Psoas muscle (tissue), 8 donors: ENCODE measurements at regions of chr16 and their contacts with region 1.

Region 1: GRCh38 chr16:46607529-46607928 is 13.7 kb downstream of the SHCBP1 start:
- DNase-seq: no peak
- ATAC-seq: peak in 2 of 4 donors; percentile 58
- H3K4me3 ChIP-seq: no peak overlapping the region
- H3K27ac ChIP-seq: no peak overlapping the region
- H3K4me1 ChIP-seq: no peaks in the 10 kb centered on the region
- H3K27me3 ChIP-seq: no peaks in the 10 kb centered on the region
- CTCF ChIP-seq: peak; percentile 46

Region 2: DNA sequence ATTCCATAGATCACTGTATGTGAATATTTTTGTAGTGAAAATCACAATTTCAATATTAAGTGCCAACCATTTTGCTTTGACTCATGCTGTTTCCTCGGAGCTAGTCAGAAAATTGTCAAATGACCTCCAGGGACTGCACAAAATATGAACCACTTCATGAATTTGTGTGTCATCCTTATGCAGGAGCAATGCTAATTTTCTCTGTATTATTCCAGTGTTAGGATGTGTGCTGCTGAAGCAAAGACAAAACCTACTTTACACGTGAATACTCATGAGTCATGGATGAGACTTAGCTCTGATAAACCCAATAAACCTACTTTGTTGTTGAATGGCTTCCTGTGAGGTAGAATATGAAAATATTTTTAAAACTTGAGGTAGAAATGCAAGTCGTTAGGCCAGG is 51.6 kb before region 1 on chr16:
- intact Hi-C with region 1: loop called (anchors 2 to 5 kb)
- DNase-seq: no peak
- ATAC-seq: no peak
- H3K4me3 ChIP-seq: no peak overlapping the region
- H3K27ac ChIP-seq: no peak overlapping the region
- H3K4me1 ChIP-seq: no peaks in the 10 kb centered on the region
- H3K27me3 ChIP-seq: no peaks in the 10 kb centered on the region
- CTCF ChIP-seq: no peak